ENCODE measurements at regions of chr4 and their contacts with region 1.

Region 1: DNA sequence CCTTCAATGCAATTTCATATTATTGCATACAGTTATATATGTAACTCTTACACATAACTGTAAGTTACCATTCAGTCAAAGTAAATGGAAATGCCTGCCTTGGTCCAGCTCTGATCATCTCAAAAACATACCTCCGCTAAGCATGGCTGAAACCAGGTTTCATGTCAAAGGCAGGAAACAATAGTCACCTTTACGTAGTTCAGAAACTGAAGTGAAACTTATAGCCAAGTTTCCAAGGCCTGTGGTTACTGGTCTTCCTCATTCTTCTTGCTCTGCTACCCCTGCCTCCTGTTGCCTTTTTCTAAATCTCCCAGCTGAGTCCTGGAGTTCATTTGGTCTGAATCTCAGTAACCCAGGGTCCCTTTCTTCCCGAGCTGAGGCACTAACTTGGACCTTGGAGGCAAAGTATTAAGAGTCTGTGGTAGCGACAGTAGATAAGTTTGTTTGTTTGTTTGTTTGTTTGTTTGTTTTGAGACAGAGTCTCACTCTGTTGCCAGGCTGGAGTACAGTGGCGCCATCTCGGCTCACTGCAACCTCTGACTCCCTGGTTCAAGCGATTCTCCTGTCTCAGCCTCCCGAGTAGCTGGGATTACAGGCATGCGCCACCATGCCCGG is 30.8 kb downstream of the DAPP1 start:
- DNase-seq: peak; percentile 29 to 44 (median 33)
- H3K4me3 ChIP-seq: peak overlapping the region in 1 of 2 donors; percentile 38
- H3K4me3 Mint-ChIP-seq: peak overlapping the region; percentile 63 to 86 (median 76)
- H3K27ac ChIP-seq: peak overlapping the region; percentile 37
- H3K27ac Mint-ChIP-seq: peak overlapping the region; percentile 77 to 98 (median 94)
- H3K4me1 ChIP-seq: peaks cover 68% of the 10 kb centered on the region
- H3K4me1 Mint-ChIP-seq: peaks cover 39 to 70% (median 55%) of the 10 kb centered on the region in 4 donors
- H3K27me3 ChIP-seq: no peaks in the 10 kb centered on the region
- H3K27me3 Mint-ChIP-seq: no peaks in the 10 kb centered on the region

Region 2: DNA sequence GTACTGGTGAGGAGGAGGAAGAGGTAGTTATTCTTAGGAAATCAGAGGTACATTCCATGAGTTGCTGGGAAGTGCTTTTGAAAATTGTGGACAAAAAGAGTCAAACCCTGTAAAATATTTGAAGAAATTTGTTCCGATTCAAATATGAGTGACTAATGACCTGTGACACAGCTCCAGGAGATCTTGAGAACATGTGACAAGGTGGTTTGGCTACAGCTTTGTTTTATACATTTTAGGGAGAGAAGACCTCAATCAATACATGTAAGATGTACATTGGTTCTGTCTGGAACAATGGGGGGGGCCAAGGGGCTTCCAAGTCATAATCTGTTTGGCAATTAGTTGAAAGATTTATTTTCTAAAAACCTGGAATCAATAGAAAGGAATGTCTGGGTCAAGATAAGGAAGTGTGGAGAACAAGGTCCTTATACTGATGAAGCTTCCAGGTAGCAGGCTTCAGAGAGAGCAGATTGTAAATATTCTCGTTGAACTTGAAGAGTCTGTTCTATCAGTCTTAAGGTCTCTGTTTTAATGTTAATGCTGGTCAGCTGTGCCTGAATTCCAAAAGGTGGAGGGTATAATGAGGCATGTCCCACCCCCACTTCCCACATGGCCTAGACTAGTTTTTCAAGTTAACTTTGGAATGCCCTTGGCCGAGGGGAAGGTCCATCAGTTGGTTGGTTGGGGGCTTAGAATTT is 46.3 kb before region 1 on chr4:
- CTCF ChIA-PET with region 1: no interaction called
- POLR2A ChIA-PET with region 1: no interaction called
- intact Hi-C with region 1: no loop called
- DNase-seq: no peak
- H3K4me3 ChIP-seq: no peak overlapping the region
- H3K4me3 Mint-ChIP-seq: no peak overlapping the region
- H3K27ac ChIP-seq: no peak overlapping the region
- H3K27ac Mint-ChIP-seq: no peak overlapping the region
- H3K4me1 ChIP-seq: no peaks in the 10 kb centered on the region
- H3K4me1 Mint-ChIP-seq: no peaks in the 10 kb centered on the region
- H3K27me3 ChIP-seq: no peaks in the 10 kb centered on the region
- H3K27me3 Mint-ChIP-seq: peaks cover 27 to 30% of the 10 kb centered on the region in 2 donors

Region 3: GRCh38 chr4:99816545-99817308 is 30.7 kb before region 1 on chr4 and contains the start of gene DAPP1:
- CTCF ChIA-PET with region 1: interaction called, 37 read pairs
- POLR2A ChIA-PET with region 1: interaction called, 41 read pairs
- intact Hi-C with region 1: loop called (anchors 1 kb)
- DNase-seq: peak; percentile 82 to 93 (median 87)
- H3K4me3 ChIP-seq: peak within 1 kb of the TSS; percentile 55 to 92
- H3K4me3 Mint-ChIP-seq: peak within 1 kb of the TSS; percentile 89 to 95 (median 91)
- H3K27ac ChIP-seq: peak within 1 kb of the TSS; percentile 69
- H3K27ac Mint-ChIP-seq: peak within 1 kb of the TSS; percentile 91 to 98 (median 97)
- H3K4me1 ChIP-seq: peaks cover 63% of the 10 kb centered on the region
- H3K4me1 Mint-ChIP-seq: peaks cover 44 to 61% (median 54%) of the 10 kb centered on the region in 4 donors
- H3K27me3 ChIP-seq: no peaks in the 10 kb centered on the region
- H3K27me3 Mint-ChIP-seq: no peaks in the 10 kb centered on the region
- total RNA-seq, gene DAPP1: 21.3 to 23.0 TPM

Region 4: DNA sequence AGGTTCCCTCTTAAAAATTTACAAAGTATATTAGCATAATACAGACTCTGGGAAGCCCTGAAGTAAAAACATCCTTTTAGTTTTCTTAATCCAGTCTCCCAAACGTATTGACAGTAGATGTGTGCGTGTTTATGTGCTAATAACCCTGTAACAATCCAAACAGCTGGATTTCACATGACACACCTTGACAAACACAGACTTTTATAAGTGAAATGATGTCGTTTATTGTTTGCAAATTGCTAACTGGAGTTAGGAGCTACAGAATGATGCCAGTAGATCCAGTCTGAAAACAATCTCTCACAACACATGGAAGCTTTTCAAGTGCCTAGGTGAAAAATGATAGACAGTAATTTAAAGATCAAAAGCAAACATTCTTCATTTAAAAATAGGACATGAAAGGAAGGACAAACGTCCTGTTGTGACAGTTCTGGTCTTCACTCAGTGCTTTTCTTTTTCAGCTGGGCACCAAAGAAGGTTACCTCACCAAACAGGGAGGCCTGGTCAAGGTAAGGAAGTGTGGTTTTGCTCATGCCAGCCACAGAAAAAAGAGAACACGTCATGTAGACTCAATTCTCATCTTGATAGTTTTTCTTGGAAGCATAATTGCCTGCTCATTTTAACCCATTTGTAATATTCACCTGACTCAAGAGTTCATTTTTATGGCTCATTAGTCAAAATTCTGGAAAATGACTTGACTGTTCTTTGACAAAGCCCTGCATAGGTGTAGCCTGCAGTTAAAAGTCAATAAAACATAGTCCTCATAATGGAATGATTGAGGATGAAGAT is 13.8 kb after region 1 on chr4:
- CTCF ChIA-PET with region 1: no interaction called
- POLR2A ChIA-PET with region 1: interaction called, 4 read pairs
- intact Hi-C with region 1: loop called (anchors 2 kb)
- DNase-seq: no peak
- H3K4me3 ChIP-seq: no peak overlapping the region
- H3K4me3 Mint-ChIP-seq: no peak overlapping the region
- H3K27ac ChIP-seq: no peak overlapping the region
- H3K27ac Mint-ChIP-seq: peak overlapping the region in 1 of 7 donors; percentile 59
- H3K4me1 ChIP-seq: peaks cover 18% of the 10 kb centered on the region
- H3K4me1 Mint-ChIP-seq: peaks cover 11 to 17% (median 12%) of the 10 kb centered on the region in 4 donors
- H3K27me3 ChIP-seq: no peaks in the 10 kb centered on the region
- H3K27me3 Mint-ChIP-seq: no peaks in the 10 kb centered on the region

Region 5: GRCh38 chr4:99894161-99894997 is 46.9 kb after region 1 on chr4 and contains the start of gene LAMTOR3:
- CTCF ChIA-PET with region 1: no interaction called
- POLR2A ChIA-PET with region 1: interaction called, 15 read pairs
- intact Hi-C with region 1: loop called (anchors 5 kb)
- DNase-seq: peak; percentile 88 to 94 (median 92)
- H3K4me3 ChIP-seq: peak within 1 kb of the TSS; percentile 76 to 97
- H3K4me3 Mint-ChIP-seq: peak within 1 kb of the TSS; percentile 97 to 100 (median 98)
- H3K27ac ChIP-seq: peak within 1 kb of the TSS; percentile 87
- H3K27ac Mint-ChIP-seq: peak within 1 kb of the TSS; percentile 97 to 99 (median 99)
- H3K4me1 ChIP-seq: peaks cover 34% of the 10 kb centered on the region
- H3K4me1 Mint-ChIP-seq: peaks cover 27 to 47% (median 38%) of the 10 kb centered on the region in 4 donors
- H3K27me3 ChIP-seq: no peaks in the 10 kb centered on the region
- H3K27me3 Mint-ChIP-seq: no peaks in the 10 kb centered on the region
- total RNA-seq, gene LAMTOR3: 24.2 to 27.0 TPM

Measured in CD4-positive, alpha-beta memory T cell (primary cell).